Adrenal gland (tissue), 19 donors: ENCODE measurements at regions of chr12 and their contacts with region 1.

Region 1: DNA sequence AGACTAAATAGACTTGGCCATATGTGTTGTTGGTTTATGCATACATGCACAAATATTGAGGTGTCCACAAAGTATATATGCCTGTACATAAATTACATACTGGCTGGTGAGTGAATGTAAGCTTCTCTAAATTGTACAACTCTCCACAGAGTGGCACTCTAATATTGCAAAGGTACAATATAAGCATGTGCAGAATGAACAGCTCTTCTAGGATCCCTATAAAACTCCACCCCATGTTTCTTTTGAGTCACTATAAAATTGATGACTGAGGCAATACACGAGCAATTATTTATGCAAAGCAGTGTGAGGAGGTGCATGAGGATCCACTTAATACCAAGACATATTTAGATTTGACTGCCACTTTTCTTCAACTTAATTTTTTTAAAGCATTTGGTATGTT is 172.2 kb downstream of the NAV3 start:
- DNase-seq: no peak
- H3K4me3 ChIP-seq: no peak overlapping the region
- H3K27ac ChIP-seq: no peak overlapping the region
- H3K4me1 ChIP-seq: no peaks in the 10 kb centered on the region
- H3K27me3 ChIP-seq: no peaks in the 10 kb centered on the region
- CTCF ChIP-seq: peak in 2 of 6 experiments; percentile 35 to 45
- POLR2A ChIP-seq: no peak

Region 2: DNA sequence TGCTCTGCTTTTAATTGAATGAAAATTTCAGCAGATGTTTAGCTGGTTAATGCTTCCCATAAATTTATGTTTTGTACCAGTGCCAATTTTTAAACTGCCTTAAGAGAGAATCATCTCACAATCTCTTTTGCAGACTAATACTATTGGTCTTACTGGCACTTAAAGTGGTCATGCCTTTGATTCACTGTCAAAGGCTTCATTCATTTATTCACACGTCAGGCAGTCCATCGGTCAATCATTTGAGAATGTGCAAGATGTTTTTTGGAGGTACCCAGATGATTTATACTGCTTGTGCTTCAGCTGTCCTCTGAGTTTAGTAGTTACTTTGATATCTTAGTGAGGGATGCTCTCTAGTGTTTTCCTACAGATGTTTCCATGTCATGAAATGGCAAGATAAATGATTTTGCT is 88.8 kb before region 1 on chr12:
- intact Hi-C with region 1: no loop called
- DNase-seq: no peak
- H3K4me3 ChIP-seq: no peak overlapping the region
- H3K27ac ChIP-seq: no peak overlapping the region
- H3K4me1 ChIP-seq: no peaks in the 10 kb centered on the region
- H3K27me3 ChIP-seq: no peaks in the 10 kb centered on the region
- CTCF ChIP-seq: no peak
- POLR2A ChIP-seq: no peak

Region 3: DNA sequence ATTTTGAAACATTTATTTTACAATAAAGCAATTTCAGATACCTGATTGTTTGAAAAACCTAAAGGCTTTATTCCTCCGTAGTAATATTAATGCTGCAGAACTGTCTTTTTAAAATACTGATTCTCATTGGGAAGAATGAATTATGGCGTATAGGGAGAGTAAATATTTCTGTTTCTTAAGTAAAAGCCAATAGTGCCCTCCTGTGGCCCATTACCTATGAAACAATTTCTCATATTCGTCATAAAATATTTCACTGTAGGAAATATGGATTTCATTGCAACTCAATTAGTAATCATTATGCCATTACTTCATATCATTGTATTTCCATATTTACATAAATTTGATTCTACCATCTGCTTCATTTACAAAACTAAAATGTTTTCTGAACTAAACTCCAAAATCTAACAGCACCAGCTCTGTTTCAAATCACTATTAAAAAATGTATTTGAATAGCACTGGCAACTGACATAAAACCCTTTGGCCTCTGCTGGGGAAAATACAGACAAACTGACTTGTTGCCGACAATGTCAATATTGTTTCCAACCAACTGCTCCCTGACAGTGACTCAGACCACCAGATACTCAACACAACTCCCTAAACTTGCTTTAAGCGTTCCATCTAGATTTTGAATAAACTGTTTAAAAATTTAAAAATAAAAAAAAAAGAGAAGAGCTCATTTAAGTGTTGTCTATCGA is 118.1 kb after region 1 on chr12:
- intact Hi-C with region 1: loop called (anchors 5 to 10 kb)
- DNase-seq: peak in 2 of 7 donors; percentile 44 to 57
- H3K4me3 ChIP-seq: no peak overlapping the region
- H3K27ac ChIP-seq: no peak overlapping the region
- H3K4me1 ChIP-seq: no peaks in the 10 kb centered on the region
- H3K27me3 ChIP-seq: no peaks in the 10 kb centered on the region
- CTCF ChIP-seq: peak in 5 of 6 experiments; percentile 52 to 71 (median 58)
- POLR2A ChIP-seq: no peak

Region 4: GRCh38 chr12:78612190-78612589 is 609.3 kb after region 1 on chr12:
- intact Hi-C with region 1: no loop called
- DNase-seq: no peak
- H3K4me3 ChIP-seq: no peak overlapping the region
- H3K27ac ChIP-seq: no peak overlapping the region
- H3K4me1 ChIP-seq: no peaks in the 10 kb centered on the region
- H3K27me3 ChIP-seq: no peaks in the 10 kb centered on the region
- CTCF ChIP-seq: no peak
- POLR2A ChIP-seq: no peak